WTC11 (cell line): ENCODE measurements at regions of chr10 and their contacts with region 1.

Region 1: GRCh38 chr10:77974396-77975074 is 48.0 kb upstream of the DLG5 start:
- DNase-seq: peak; percentile 66
- ATAC-seq: peak; percentile 85
- H3K4me3 Mint-ChIP-seq: no peak overlapping the region
- H3K27ac Mint-ChIP-seq: peak overlapping the region; percentile 43; the same call in 1 of the 2 replicates
- H3K4me1 Mint-ChIP-seq: peaks cover 20% of the 10 kb centered on the region
- H3K27me3 Mint-ChIP-seq: no peaks in the 10 kb centered on the region
- CTCF ChIP-seq: peak; percentile 52

Region 2: DNA sequence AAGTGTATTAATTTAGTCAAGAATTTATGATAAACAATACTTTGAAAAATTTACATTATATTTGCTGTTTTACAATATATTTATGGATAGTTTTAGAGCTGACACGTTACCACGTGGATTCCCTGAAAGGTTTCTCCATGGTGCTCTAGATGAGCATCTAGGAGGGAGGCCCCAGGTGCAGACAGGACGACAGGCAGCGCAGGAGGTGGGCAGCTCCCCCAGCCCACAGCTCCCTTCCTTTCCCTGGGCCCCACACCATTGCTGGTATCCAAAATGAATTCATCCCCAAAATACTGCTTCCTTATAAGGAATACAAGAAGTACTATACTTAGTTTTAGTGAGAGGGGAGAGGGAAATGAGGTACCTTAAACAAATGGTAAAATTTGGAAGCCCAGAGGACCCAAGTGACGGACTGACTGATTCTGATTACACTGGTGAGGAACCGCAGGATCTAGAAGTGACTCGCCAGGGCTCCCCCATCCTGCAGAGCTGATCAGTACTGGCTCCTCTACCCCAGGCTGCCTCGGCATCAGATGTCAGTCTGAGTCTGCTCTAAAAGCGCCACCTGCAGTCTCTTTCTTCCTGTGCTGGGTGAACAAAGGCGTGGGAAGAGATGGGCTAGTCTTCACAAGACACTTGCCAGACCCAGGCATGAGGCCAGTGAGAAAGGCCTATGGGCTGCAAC is 137.2 kb before region 1 on chr10:
- CTCF ChIA-PET with region 1: interaction called, 20 read pairs
- POLR2A ChIA-PET with region 1: interaction called, 3 read pairs
- DNase-seq: peak; percentile 82
- ATAC-seq: peak; percentile 96
- H3K4me3 Mint-ChIP-seq: no peak overlapping the region
- H3K27ac Mint-ChIP-seq: peak overlapping the region; percentile 95; the same call in 1 of the 2 replicates
- H3K4me1 Mint-ChIP-seq: peaks cover 26% of the 10 kb centered on the region
- H3K27me3 Mint-ChIP-seq: no peaks in the 10 kb centered on the region
- CTCF ChIP-seq: no peak

Region 3: GRCh38 chr10:77898647-77899477 is 75.7 kb before region 1 on chr10:
- CTCF ChIA-PET with region 1: interaction called, 10 read pairs
- POLR2A ChIA-PET with region 1: no interaction called
- DNase-seq: no peak
- ATAC-seq: peak; percentile 72
- H3K4me3 Mint-ChIP-seq: no peak overlapping the region
- H3K27ac Mint-ChIP-seq: peak overlapping the region; percentile 91
- H3K4me1 Mint-ChIP-seq: peaks cover 49% of the 10 kb centered on the region
- H3K27me3 Mint-ChIP-seq: no peaks in the 10 kb centered on the region
- CTCF ChIP-seq: no peak

Region 4: GRCh38 chr10:77926566-77927401 is 47.8 kb before region 1 on chr10 and contains the start of gene DLG5:
- CTCF ChIA-PET with region 1: interaction called, 27 read pairs
- POLR2A ChIA-PET with region 1: interaction called, 3 read pairs
- DNase-seq: peak; percentile 44
- ATAC-seq: peak; percentile 38
- H3K4me3 Mint-ChIP-seq: peak within 1 kb of the TSS; percentile 69
- H3K27ac Mint-ChIP-seq: peak within 1 kb of the TSS; percentile 40; the same call in 1 of the 2 replicates
- H3K4me1 Mint-ChIP-seq: peaks cover 42% of the 10 kb centered on the region
- H3K27me3 Mint-ChIP-seq: peaks cover 8% of the 10 kb centered on the region
- CTCF ChIP-seq: no peak
- total RNA-seq, gene DLG5: 58.1 to 65.5 TPM (median 59.1 TPM) in 3 replicates

Region 5: GRCh38 chr10:77949167-77949566 is 25.4 kb before region 1 on chr10:
- CTCF ChIA-PET with region 1: interaction called, 12 read pairs
- POLR2A ChIA-PET with region 1: no interaction called
- DNase-seq: peak; percentile 84
- ATAC-seq: peak; percentile 98
- H3K4me3 Mint-ChIP-seq: peak overlapping the region; percentile 30
- H3K27ac Mint-ChIP-seq: peak overlapping the region; percentile 97
- H3K4me1 Mint-ChIP-seq: peaks cover 14% of the 10 kb centered on the region
- H3K27me3 Mint-ChIP-seq: 0 out of 2 replicates have a peak, but pooled peaks cover 3% of the 10 kb centered on the region
- CTCF ChIP-seq: no peak